ENCODE measurements at regions of chr1 and their contacts with region 1.

Region 1: GRCh38 chr1:3530926-3531818 is 76.7 kb downstream of the ARHGEF16 start:
- DNase-seq: peak; percentile 52 to 86 (median 81)
- ATAC-seq: peak; percentile 89
- H3K4me3 ChIP-seq: peak overlapping the region; percentile 90
- H3K4me3 Mint-ChIP-seq: peak overlapping the region; percentile 81 to 97 (median 86)
- H3K27ac ChIP-seq: peak overlapping the region; percentile 68
- H3K27ac Mint-ChIP-seq: peak overlapping the region; percentile 82 to 99 (median 95)
- H3K4me1 ChIP-seq: peaks cover 9 to 12% of the 10 kb centered on the region in 2 donors
- H3K4me1 Mint-ChIP-seq: peaks cover 9 to 26% (median 23%) of the 10 kb centered on the region in 7 donors
- H3K27me3 ChIP-seq: no peaks in the 10 kb centered on the region
- H3K27me3 Mint-ChIP-seq: no peaks in the 10 kb centered on the region

Region 2: DNA sequence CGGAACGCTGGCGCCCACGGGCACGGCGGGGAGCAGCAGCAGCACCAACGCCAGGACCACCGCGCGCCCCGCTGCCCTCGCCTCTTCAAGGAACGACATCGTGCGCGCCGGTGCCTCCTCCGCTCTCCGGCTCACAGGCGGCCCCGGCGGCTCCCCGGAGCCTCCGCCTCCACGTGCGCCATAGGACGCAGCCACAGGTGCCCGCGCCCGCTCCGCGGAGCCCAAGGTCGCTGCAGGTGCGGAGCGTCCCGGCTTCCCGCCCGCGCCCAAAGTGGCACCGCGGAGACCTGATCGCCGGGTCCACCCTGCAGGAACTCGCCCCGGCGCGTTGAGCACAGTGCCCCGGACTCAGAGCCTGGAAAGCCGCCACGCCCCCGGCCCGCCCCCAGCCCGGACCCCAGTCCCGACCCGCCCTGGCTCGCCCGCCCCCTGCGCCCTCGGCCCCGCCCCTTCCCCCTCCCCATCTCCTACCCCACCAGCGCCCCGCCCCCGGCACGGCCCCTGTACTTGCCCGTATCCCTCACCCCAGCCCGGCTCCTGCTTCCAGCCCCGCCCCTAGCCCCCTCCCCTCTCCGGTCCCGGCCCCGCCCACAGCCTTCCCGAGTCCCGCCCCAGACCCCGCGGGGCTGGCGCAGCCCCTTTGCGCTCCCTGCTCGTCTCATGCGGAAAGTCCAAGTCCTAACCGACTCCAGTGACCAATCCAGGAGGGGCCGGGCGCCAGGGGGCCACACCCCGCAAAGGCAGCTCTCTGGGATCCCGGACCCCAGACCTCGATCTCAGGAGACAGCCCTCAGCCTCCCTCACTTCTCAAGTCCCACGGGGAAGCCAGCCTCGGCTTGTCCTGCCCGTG is 80.2 kb after region 1 on chr1 and contains the start of gene MEGF6:
- CTCF ChIA-PET with region 1: no interaction called
- POLR2A ChIA-PET with region 1: no interaction called
- intact Hi-C with region 1: loop called in 1 of 2 experiments (anchors 1 kb)
- DNase-seq: peak in 4 of 9 donors; percentile 28 to 59 (median 36)
- ATAC-seq: peak; percentile 75
- H3K4me3 ChIP-seq: no peak within 1 kb of the TSS
- H3K4me3 Mint-ChIP-seq: peak within 1 kb of the TSS; percentile 30 to 86 (median 80)
- H3K27ac ChIP-seq: no peak within 1 kb of the TSS
- H3K27ac Mint-ChIP-seq: peak within 1 kb of the TSS in 2 of 9 donors; percentile 20 to 42
- H3K4me1 ChIP-seq: peaks cover 0 to 9% of the 10 kb centered on the region in 2 donors
- H3K4me1 Mint-ChIP-seq: peaks cover 0 to 10% (median 10%) of the 10 kb centered on the region in 7 donors
- H3K27me3 ChIP-seq: no peaks in the 10 kb centered on the region
- H3K27me3 Mint-ChIP-seq: peaks cover 0 to 34% (median 6%) of the 10 kb centered on the region in 5 donors
- total RNA-seq, gene MEGF6: 14.6 to 209 (median 81.3) TPM

Region 3: DNA sequence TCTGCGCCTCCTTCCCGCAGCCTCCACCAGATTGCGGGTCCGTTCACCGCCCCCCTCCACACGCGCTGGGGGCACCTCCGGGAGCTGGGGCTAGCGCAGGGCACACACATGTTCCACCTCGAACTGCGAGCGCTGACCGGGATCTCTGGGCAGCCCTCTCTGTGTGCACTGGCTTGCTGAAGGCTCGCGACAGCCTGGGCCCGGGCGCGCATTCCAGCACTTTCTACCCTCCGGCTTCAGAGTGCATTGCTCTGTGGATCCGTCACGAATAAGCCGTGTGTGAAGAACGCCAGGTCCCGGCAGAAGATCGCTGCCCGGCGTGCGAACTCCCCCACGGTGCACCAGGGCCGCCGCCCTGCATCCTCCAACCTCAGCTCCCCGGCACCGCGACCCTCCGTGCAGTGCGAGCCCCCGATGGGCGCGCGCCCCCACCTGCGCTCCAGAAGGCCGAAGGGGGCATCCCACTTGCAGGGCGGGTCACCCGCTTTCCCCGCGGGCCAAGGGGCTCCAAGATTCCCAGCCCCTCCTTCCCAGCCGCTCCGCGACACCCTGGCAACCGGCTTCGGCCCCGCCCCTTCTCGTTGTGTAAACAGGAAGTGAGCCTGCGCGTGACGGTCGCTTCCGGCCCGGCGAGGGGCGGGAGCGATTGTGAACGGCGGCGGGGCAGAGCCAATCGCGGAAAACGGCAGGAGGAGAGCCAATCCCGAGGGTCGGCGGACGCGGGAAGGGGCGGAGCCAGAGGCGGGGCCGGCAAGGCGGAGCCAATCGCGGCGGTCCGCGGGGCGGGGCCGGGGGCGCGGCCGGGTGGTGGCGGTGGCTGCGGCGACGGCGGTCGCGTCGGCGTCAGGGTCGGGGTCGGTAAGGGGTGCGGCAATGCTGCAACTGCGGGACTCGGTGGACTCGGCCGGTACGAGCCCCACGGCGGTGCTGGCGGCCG is 93.3 kb after region 1 on chr1 and contains the start of gene TPRG1L:
- CTCF ChIA-PET with region 1: interaction called, 10 read pairs
- POLR2A ChIA-PET with region 1: interaction called, 7 read pairs
- intact Hi-C with region 1: loop called (anchors 1 kb)
- DNase-seq: peak; percentile 97 to 100 (median 99)
- ATAC-seq: peak; percentile 98
- H3K4me3 ChIP-seq: peak within 1 kb of the TSS; percentile 95
- H3K4me3 Mint-ChIP-seq: peak within 1 kb of the TSS; percentile 91 to 99 (median 96)
- H3K27ac ChIP-seq: peak within 1 kb of the TSS; percentile 78
- H3K27ac Mint-ChIP-seq: peak within 1 kb of the TSS; percentile 92 to 98 (median 96)
- H3K4me1 ChIP-seq: peaks cover 22% of the 10 kb centered on the region in 2 donors
- H3K4me1 Mint-ChIP-seq: peaks cover 27 to 57% (median 42%) of the 10 kb centered on the region in 7 donors
- H3K27me3 ChIP-seq: no peaks in the 10 kb centered on the region
- H3K27me3 Mint-ChIP-seq: peaks cover 0 to 13% (median 0%) of the 10 kb centered on the region in 5 donors
- total RNA-seq, gene TPRG1L: 15.6 to 61.4 (median 37.8) TPM

Region 4: DNA sequence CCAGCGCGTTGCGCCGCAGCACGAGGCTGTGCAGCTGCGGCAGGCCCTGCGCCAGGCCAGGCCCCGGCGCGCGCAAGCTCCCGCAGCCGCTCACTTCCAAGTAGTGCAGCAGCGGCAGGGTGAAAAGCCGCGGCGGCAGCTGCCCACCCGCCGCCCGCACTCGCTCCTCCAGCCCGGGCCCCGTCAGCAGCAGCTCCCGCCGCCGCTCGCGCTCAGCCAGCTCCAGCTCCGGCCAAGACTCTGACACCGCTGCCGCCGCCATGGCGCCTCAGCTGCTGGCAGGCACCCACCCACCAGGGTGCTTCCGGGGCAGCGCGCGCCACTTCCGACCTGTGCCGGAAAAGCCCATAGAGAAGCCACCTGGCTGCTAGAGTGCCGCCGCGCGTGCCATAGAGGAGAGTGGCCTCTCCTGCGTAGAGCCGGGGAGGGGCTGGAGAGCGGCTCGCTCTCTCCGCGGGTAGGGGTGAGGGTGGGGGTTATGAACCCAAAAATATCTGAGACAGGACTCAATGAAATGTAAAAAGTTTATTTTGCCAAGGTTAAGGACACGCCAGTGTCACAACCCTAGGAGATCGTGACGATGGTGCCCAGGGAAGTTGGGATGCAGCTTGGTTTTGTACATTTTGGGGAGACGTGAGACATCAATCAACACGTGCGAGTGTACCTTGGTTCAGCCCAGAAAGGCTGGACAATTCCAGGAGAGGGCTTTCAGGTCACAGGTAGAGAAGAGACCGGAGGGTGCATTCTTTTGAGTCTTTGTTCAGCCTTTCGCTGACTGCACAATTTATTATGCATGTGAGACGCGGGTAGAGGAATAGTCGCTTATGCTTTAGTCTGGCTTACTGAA is 265.3 kb after region 1 on chr1 and contains the start of gene LRRC47:
- CTCF ChIA-PET with region 1: no interaction called
- POLR2A ChIA-PET with region 1: no interaction called
- intact Hi-C with region 1: loop called in 1 of 2 experiments (anchors 1 kb)
- DNase-seq: peak; percentile 89 to 97 (median 94)
- ATAC-seq: peak; percentile 100
- H3K4me3 ChIP-seq: peak within 1 kb of the TSS; percentile 74
- H3K4me3 Mint-ChIP-seq: peak within 1 kb of the TSS; percentile 88 to 98 (median 93)
- H3K27ac ChIP-seq: peak within 1 kb of the TSS; percentile 69
- H3K27ac Mint-ChIP-seq: peak within 1 kb of the TSS; percentile 87 to 97 (median 93)
- H3K4me1 ChIP-seq: peaks cover 22 to 28% of the 10 kb centered on the region in 2 donors
- H3K4me1 Mint-ChIP-seq: peaks cover 8 to 52% (median 42%) of the 10 kb centered on the region in 7 donors
- H3K27me3 ChIP-seq: no peaks in the 10 kb centered on the region
- H3K27me3 Mint-ChIP-seq: peaks cover 9 to 11% (median 10%) of the 10 kb centered on the region in 5 donors
- total RNA-seq, gene LRRC47: 38.2 to 60.2 (median 43.9) TPM

Region 5: DNA sequence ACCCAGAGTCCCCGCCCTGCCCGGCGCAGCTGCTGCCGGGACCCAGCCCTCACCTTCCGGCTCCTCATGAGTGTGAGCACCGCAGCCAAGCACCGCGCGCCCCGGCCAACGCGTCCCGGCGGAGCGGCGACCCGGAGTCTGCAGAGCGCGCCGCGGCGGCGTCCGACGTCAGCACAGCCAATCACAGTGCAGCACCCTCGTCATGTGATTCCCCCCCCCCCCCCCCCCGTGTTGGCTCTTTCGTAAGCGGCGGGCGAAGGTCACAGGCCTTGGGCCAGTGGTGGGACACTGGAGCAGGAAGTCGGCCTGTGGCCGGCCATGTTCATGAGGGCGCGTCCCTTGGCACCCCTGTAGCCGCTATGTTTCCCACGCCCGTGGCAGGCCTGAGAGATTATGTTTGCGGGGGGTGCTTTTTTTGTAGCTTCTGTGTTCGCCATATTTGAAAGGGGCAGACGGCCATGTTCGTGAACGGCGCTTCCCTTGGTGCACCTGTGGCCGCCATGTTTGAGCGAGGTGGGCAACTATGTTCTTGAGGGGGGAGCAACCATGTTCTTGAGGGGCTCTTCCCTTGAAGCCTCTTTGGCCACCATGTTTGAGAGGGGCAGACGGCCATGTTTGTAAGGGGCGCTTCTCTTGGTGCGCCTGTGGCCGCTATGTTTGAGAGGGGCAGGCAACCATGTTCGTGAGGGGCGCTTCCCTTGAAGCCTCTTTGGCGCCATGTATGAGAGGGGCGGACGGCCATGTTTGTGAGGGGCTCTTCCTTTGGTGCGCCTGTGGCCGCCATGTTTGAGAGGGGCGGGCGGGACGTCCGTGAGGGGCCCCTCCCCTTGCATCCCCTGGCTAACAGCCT is 369.2 kb after region 1 on chr1 and contains the start of gene C1orf174:
- CTCF ChIA-PET with region 1: no interaction called
- POLR2A ChIA-PET with region 1: no interaction called
- intact Hi-C with region 1: loop called (anchors 2 to 5 kb)
- DNase-seq: peak; percentile 78 to 99 (median 96)
- ATAC-seq: peak; percentile 88
- H3K4me3 ChIP-seq: peak within 1 kb of the TSS; percentile 79
- H3K4me3 Mint-ChIP-seq: peak within 1 kb of the TSS; percentile 90 to 96 (median 94)
- H3K27ac ChIP-seq: peak within 1 kb of the TSS; percentile 94
- H3K27ac Mint-ChIP-seq: peak within 1 kb of the TSS; percentile 92 to 99 (median 96)
- H3K4me1 ChIP-seq: peaks cover 6 to 39% of the 10 kb centered on the region in 2 donors
- H3K4me1 Mint-ChIP-seq: peaks cover 23 to 71% (median 53%) of the 10 kb centered on the region in 7 donors
- H3K27me3 ChIP-seq: no peaks in the 10 kb centered on the region
- H3K27me3 Mint-ChIP-seq: no peaks in the 10 kb centered on the region
- total RNA-seq, gene C1orf174: 17.0 to 33.6 (median 27.1) TPM

Region 6: DNA sequence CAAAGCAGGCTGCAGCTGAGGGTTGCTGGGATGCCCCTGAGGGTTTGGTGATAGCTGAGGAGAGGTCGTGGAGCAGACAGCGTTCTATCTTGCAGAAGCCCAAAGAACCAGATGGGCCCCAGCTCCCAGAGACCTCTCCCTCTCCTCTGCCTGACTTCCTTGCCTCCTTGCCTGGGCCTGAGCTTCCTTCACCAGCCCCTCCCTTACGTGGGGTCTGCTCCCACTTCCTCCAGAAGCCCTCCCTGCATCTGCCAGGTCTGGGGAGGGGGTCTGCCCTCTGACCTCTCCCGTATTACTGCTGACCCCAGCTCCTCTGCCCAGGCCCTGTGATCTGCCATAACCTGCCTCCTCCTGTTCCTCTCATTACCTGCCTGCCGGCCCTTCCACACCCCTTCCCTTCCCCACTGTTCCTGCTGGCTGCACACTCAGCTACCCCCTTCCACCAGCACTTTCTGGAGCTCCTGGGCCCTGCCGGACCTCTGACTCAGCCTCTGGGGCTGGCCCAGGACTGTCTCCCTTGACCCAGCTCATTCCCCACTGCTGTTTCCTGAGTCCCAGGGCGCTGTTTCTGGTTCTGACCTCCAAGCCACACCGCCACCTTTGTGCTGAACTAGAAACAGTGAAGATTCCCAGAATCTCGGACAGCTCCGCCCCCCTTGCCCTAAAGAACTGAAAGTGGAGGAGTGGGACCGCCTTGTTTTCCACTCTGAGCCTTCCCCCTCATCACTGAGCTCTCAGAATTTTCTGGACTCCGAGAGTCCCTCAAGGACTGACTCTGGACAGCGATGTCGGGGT is 606.6 kb after region 1 on chr1:
- CTCF ChIA-PET with region 1: no interaction called
- POLR2A ChIA-PET with region 1: no interaction called
- intact Hi-C with region 1: no loop called
- DNase-seq: no peak
- ATAC-seq: no peak
- H3K4me3 ChIP-seq: no peak overlapping the region
- H3K4me3 Mint-ChIP-seq: no peak overlapping the region
- H3K27ac ChIP-seq: no peak overlapping the region
- H3K27ac Mint-ChIP-seq: no peak overlapping the region
- H3K4me1 ChIP-seq: no peaks in the 10 kb centered on the region
- H3K4me1 Mint-ChIP-seq: peaks cover 0 to 3% (median 0%) of the 10 kb centered on the region in 7 donors
- H3K27me3 ChIP-seq: no peaks in the 10 kb centered on the region
- H3K27me3 Mint-ChIP-seq: peaks cover 0 to 45% (median 21%) of the 10 kb centered on the region in 5 donors

Region 7: GRCh38 chr1:4322881-4323280 is 791.7 kb after region 1 on chr1:
- CTCF ChIA-PET with region 1: no interaction called
- POLR2A ChIA-PET with region 1: no interaction called
- intact Hi-C with region 1: no loop called
- DNase-seq: no peak
- ATAC-seq: no peak
- H3K4me3 ChIP-seq: no peak overlapping the region
- H3K4me3 Mint-ChIP-seq: no peak overlapping the region
- H3K27ac ChIP-seq: no peak overlapping the region
- H3K27ac Mint-ChIP-seq: no peak overlapping the region
- H3K4me1 ChIP-seq: no peaks in the 10 kb centered on the region
- H3K4me1 Mint-ChIP-seq: peaks cover 0 to 3% (median 0%) of the 10 kb centered on the region in 7 donors
- H3K27me3 ChIP-seq: no peaks in the 10 kb centered on the region
- H3K27me3 Mint-ChIP-seq: peaks cover 0 to 17% (median 10%) of the 10 kb centered on the region in 5 donors

Region 8: GRCh38 chr1:4527819-4528218 is 996.6 kb after region 1 on chr1:
- CTCF ChIA-PET with region 1: no interaction called
- POLR2A ChIA-PET with region 1: no interaction called
- intact Hi-C with region 1: no loop called
- DNase-seq: no peak
- ATAC-seq: no peak
- H3K4me3 ChIP-seq: no peak overlapping the region
- H3K4me3 Mint-ChIP-seq: no peak overlapping the region
- H3K27ac ChIP-seq: no peak overlapping the region
- H3K27ac Mint-ChIP-seq: no peak overlapping the region
- H3K4me1 ChIP-seq: no peaks in the 10 kb centered on the region
- H3K4me1 Mint-ChIP-seq: no peaks in the 10 kb centered on the region
- H3K27me3 ChIP-seq: no peaks in the 10 kb centered on the region
- H3K27me3 Mint-ChIP-seq: peaks cover 0 to 32% (median 15%) of the 10 kb centered on the region in 5 donors